ENCODE measurements at regions of chr1 and their contacts with region 1.

Region 1: DNA sequence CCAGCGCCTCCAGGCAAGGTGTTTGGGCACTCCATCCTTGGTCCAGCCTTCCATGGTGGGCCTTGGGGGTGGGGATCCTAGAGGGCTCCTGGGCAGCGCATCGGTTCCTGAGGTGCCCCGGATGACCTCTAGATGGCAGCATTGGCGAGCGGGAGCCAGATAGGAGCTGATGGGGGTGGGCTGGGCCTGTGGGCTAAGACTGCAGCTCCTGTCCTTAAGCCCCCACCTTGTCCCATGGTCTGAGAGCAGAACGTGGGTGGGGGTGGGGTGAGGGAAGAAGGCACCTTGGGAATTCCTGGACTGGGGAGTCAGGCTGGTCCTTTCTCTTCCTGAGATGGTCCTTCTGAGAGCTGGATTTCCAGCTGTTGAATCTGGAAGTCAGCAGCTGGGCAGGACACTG is 93.4 kb upstream of the CSF3R start:
- DNase-seq: peak; percentile 91
- H3K4me3 ChIP-seq: peak overlapping the region in 1 of 2 experiments; percentile 32; a peak in 1 of 4 replicates
- H3K27ac ChIP-seq: no peak overlapping the region
- H3K4me1 ChIP-seq: no peaks in the 10 kb centered on the region; a peak in 1 of 4 replicates
- H3K27me3 ChIP-seq: no peaks in the 10 kb centered on the region
- CTCF ChIP-seq: peak; percentile 83
- EP300 ChIP-seq: no peak
- RAD21 ChIP-seq: peak; percentile 89

Region 2: DNA sequence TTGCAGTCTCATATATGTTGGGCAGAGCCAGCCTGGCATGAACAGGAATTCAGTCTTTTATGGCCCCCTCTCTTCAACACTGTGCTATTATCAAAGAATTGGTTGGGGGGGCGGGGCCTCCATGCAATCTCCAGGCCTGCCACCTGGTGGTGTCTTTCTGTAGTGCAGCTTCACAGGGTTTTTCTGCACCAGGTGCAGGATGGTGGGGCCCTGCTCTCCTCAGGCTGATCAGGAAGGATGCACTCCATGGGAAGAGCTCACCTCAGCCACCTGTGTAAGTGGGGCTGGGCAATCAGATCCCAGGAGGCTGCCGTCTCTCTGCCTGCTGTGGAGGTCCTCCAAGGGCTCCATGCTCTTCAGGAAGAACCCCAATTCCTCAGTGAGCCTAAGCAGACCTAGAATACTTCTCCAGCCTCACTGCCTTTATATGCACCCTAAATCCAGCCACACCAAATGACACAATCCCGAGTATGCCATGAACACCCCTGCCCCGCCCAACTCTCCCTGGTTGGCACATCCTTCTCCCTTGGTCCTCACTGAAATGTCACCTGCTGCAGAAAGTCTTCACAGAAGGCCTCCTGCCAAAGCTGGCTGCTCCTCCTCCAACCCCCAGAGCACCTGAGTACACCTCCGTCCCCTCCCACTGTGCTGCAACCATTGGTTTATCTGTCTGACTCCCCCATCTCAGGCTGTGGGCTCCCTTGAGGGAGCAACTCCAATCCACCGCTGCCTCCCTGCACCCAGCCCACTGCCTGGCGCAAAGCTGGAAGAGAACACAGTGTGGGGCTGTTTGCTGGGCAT is 206.9 kb before region 1 on chr1:
- CTCF ChIA-PET with region 1: no interaction called
- POLR2A ChIA-PET with region 1: no interaction called
- DNase-seq: peak; percentile 84
- H3K4me3 ChIP-seq: peak overlapping the region in 1 of 2 experiments; percentile 26; a peak in 1 of 4 replicates
- H3K27ac ChIP-seq: peak overlapping the region; percentile 5 to 99; a peak in 3 of 4 replicates
- H3K4me1 ChIP-seq: peaks cover 39 to 62% of the 10 kb centered on the region in 2 experiments
- H3K27me3 ChIP-seq: no peaks in the 10 kb centered on the region
- CTCF ChIP-seq: peak; percentile 85
- EP300 ChIP-seq: no peak
- RAD21 ChIP-seq: peak; percentile 72

Region 3: GRCh38 chr1:36553591-36554322 is 22.4 kb before region 1 on chr1:
- CTCF ChIA-PET with region 1: interaction called, 25 read pairs
- POLR2A ChIA-PET with region 1: no interaction called
- DNase-seq: peak; percentile 83
- H3K4me3 ChIP-seq: peak overlapping the region in 1 of 2 experiments; percentile 20; a peak in 1 of 4 replicates
- H3K27ac ChIP-seq: no peak overlapping the region
- H3K4me1 ChIP-seq: no peaks in the 10 kb centered on the region
- H3K27me3 ChIP-seq: no peaks in the 10 kb centered on the region
- CTCF ChIP-seq: peak; percentile 73
- EP300 ChIP-seq: no peak
- RAD21 ChIP-seq: peak; percentile 86

Region 4: DNA sequence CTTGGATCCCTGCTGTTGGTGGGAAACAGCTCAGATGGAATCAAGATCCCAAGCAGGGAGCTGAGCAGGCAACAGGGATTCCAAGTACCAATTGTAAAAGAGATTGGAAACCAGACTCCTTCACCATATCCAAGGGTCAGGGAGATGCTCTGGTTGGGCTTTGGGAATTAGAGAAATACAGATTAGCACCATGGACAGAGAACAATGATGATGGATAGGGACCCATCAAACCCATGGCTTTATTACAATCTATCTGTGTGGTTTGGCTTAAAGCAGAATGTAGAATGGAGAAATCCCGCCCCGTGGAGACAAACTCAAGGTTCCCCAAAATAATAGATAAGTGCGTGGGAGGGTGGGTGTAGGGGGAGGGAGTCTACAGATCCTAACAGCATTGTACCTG is 27.3 kb after region 1 on chr1:
- CTCF ChIA-PET with region 1: interaction called, 14 read pairs
- POLR2A ChIA-PET with region 1: no interaction called
- DNase-seq: no peak
- H3K4me3 ChIP-seq: no peak overlapping the region
- H3K27ac ChIP-seq: no peak overlapping the region
- H3K4me1 ChIP-seq: no peaks in the 10 kb centered on the region
- H3K27me3 ChIP-seq: no peaks in the 10 kb centered on the region
- CTCF ChIP-seq: no peak
- EP300 ChIP-seq: no peak
- RAD21 ChIP-seq: no peak

Region 5: GRCh38 chr1:36693161-36693525 is 117.0 kb after region 1 on chr1:
- CTCF ChIA-PET with region 1: interaction called, 11 read pairs
- POLR2A ChIA-PET with region 1: no interaction called
- DNase-seq: no peak
- H3K4me3 ChIP-seq: no peak overlapping the region
- H3K27ac ChIP-seq: no peak overlapping the region
- H3K4me1 ChIP-seq: no peaks in the 10 kb centered on the region; a peak in 1 of 4 replicates
- H3K27me3 ChIP-seq: no peaks in the 10 kb centered on the region
- CTCF ChIP-seq: no peak
- EP300 ChIP-seq: no peak
- RAD21 ChIP-seq: no peak

Region 6: DNA sequence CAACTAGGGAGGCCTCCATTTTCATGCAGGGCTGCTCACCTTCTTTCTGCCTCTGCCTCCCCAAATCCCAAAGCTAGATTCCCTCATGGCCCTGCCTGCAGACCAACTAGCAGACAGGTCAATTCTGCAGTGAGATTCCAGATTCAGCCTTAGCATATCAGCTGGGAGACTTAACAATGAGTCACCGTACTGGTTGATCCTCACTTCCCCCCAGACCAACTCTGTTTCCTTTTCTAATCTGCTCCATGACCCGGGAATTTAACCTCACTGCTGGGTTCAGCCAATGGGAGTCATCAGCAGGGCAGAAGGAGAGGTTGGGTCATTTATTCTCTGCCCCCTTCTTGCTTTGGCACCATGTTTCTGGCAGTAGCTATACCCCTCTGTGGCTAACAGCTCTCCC is 598.8 kb after region 1 on chr1:
- CTCF ChIA-PET with region 1: interaction called, 10 read pairs
- POLR2A ChIA-PET with region 1: no interaction called
- DNase-seq: no peak
- H3K4me3 ChIP-seq: no peak overlapping the region
- H3K27ac ChIP-seq: no peak overlapping the region
- H3K4me1 ChIP-seq: no peaks in the 10 kb centered on the region; a peak in 1 of 4 replicates
- H3K27me3 ChIP-seq: no peaks in the 10 kb centered on the region
- CTCF ChIP-seq: no peak
- EP300 ChIP-seq: no peak
- RAD21 ChIP-seq: no peak

Region 7: GRCh38 chr1:37486680-37487618 is 910.8 kb after region 1 on chr1:
- CTCF ChIA-PET with region 1: interaction called, 29 read pairs
- POLR2A ChIA-PET with region 1: no interaction called
- DNase-seq: peak; percentile 83
- H3K4me3 ChIP-seq: peak overlapping the region in 1 of 2 experiments; percentile 1; a peak in 1 of 4 replicates
- H3K27ac ChIP-seq: peak overlapping the region; percentile 5 to 13; a peak in 1 of 4 replicates
- H3K4me1 ChIP-seq: peaks cover 0 to 30% of the 10 kb centered on the region in 2 experiments; a peak in 1 of 4 replicates
- H3K27me3 ChIP-seq: no peaks in the 10 kb centered on the region
- CTCF ChIP-seq: peak; percentile 97
- EP300 ChIP-seq: no peak
- RAD21 ChIP-seq: peak; percentile 83

Measured in SK-N-SH (cell line).